ENCODE measurements at regions of chr11 and their contacts with region 1.

Region 1: DNA sequence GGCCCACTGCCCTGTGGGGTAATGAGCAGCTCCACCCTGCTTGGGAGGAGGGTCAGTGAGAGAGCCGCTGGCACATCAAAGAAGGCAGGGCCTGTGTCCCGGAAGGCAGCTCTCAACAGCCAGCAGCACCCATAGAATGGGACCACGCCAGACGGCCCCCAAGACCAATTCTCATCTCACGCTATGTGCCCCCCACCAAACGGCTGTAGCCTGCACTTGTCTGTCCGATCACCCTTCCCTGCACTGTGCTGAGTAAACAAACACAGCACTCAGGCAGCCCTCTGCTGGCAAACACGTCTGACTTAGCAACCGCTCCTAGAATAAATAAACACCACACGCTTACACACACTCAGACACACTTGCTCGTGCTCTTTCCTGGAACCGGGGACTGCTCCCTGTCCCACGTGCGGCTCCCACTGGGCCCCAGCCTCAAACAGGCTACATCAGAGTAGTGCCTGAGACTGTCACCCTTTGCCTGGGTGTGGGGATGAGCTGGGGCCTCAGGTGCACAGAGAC is 53.2 kb upstream of the CDON start:
- DNase-seq: peak; percentile 62
- H3K4me3 ChIP-seq: no peak overlapping the region
- H3K27ac ChIP-seq: peak overlapping the region in 1 of 2 experiments; percentile 100; a peak in 3 of 4 replicates
- H3K4me1 ChIP-seq: peaks cover 32 to 70% of the 10 kb centered on the region in 2 experiments
- H3K27me3 ChIP-seq: no peaks in the 10 kb centered on the region
- CTCF ChIP-seq: no peak
- EP300 ChIP-seq: peak in 1 of 2 experiments; percentile 41; a peak in 1 of 4 replicates
- RAD21 ChIP-seq: peak; percentile 73

Region 2: DNA sequence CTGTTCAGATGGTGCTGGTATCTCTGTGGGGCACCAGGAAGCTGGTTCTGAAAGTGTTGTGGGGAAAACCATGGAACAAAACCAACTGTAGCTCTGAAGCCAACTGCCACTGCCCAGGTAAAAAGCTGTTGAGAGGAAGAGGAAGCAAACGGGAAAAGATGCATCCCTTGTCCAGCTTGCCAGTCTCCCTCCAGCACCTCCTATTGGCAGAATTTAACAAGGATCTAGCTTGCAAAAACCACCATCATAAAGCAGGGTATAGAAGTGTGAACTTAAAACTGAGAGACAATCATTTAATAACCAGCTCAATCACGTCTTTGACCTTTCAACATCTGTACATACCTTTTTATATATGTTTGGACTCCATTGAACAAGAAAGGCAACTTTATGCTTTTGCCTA is 365.2 kb before region 1 on chr11:
- CTCF ChIA-PET with region 1: no interaction called
- POLR2A ChIA-PET with region 1: no interaction called
- DNase-seq: no peak
- H3K4me3 ChIP-seq: no peak overlapping the region
- H3K27ac ChIP-seq: no peak overlapping the region
- H3K4me1 ChIP-seq: no peaks in the 10 kb centered on the region
- H3K27me3 ChIP-seq: peaks cover 15% of the 10 kb centered on the region; the same call in 1 of the 2 replicates
- CTCF ChIP-seq: no peak
- EP300 ChIP-seq: no peak
- RAD21 ChIP-seq: no peak

Region 3: DNA sequence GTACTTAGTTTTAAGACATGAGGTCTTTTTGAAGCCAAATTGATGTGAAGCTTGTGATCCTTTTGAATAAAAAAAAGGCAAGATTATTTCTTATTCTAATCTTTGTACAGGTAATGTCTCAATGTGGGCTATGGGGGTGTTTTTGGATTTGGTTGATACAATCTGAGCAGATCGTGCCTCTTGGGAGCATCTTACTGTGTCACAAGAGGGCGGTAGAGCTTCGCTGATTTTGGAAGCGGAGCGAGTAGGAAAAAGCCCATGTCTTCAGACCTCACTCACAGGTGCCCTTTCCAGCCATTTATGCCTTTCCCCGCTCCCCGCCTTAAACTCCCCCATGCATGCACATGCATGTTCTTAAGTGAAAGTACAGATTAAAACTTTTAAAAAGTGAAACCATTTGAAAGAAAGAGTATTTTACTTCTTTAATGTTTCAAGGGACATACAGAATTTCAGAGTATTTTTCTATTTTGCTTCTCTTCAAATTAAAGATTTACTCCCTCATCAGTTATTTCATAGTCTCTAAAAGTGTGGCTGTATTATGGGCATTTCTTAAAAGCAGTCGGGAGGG is 192.8 kb before region 1 on chr11:
- CTCF ChIA-PET with region 1: interaction called, 22 read pairs
- POLR2A ChIA-PET with region 1: interaction called, 4 read pairs
- DNase-seq: peak; percentile 74
- H3K4me3 ChIP-seq: no peak overlapping the region; a peak in 1 of 4 replicates
- H3K27ac ChIP-seq: no peak overlapping the region
- H3K4me1 ChIP-seq: peaks cover 0 to 26% of the 10 kb centered on the region in 2 experiments; a peak in 1 of 4 replicates
- H3K27me3 ChIP-seq: peaks cover 38% of the 10 kb centered on the region; the same call in 1 of the 2 replicates
- CTCF ChIP-seq: peak; percentile 90
- EP300 ChIP-seq: no peak
- RAD21 ChIP-seq: peak; percentile 98

Region 4: DNA sequence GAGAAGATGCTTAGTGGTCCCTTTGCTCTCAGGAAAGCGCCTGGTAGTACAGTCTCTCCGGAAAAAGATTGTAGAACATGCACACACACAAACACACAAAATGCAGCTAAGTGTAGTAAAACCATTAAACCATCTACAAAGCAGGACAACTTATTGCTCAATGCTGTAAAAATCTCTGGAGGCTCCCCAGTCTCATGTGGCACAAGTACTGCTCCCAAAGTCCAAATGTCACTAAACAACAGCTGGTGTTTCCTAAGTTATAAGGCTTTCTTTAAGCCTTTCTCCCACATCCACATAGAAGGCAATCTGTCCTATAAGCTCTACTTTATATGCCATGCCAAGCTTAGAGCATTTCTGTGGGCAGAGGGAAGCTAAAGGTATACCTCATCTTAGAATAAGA is 86.1 kb before region 1 on chr11:
- CTCF ChIA-PET with region 1: no interaction called
- POLR2A ChIA-PET with region 1: no interaction called
- DNase-seq: no peak
- H3K4me3 ChIP-seq: no peak overlapping the region
- H3K27ac ChIP-seq: no peak overlapping the region
- H3K4me1 ChIP-seq: peaks cover 0 to 3% of the 10 kb centered on the region in 2 experiments; a peak in 1 of 4 replicates
- H3K27me3 ChIP-seq: no peaks in the 10 kb centered on the region
- CTCF ChIP-seq: no peak
- EP300 ChIP-seq: no peak
- RAD21 ChIP-seq: no peak

Region 5: GRCh38 chr11:126053415-126054286 is 62.2 kb before region 1 on chr11:
- CTCF ChIA-PET with region 1: interaction called, 95 read pairs
- POLR2A ChIA-PET with region 1: interaction called, 8 read pairs
- DNase-seq: peak; percentile 57
- H3K4me3 ChIP-seq: no peak overlapping the region
- H3K27ac ChIP-seq: peak overlapping the region in 1 of 2 experiments; percentile 92; a peak in 2 of 4 replicates
- H3K4me1 ChIP-seq: peaks cover 0 to 49% of the 10 kb centered on the region in 2 experiments; a peak in 3 of 4 replicates
- H3K27me3 ChIP-seq: no peaks in the 10 kb centered on the region
- CTCF ChIP-seq: no peak
- EP300 ChIP-seq: peak in 1 of 2 experiments; percentile 67; a peak in 1 of 4 replicates
- RAD21 ChIP-seq: no peak

Region 6: DNA sequence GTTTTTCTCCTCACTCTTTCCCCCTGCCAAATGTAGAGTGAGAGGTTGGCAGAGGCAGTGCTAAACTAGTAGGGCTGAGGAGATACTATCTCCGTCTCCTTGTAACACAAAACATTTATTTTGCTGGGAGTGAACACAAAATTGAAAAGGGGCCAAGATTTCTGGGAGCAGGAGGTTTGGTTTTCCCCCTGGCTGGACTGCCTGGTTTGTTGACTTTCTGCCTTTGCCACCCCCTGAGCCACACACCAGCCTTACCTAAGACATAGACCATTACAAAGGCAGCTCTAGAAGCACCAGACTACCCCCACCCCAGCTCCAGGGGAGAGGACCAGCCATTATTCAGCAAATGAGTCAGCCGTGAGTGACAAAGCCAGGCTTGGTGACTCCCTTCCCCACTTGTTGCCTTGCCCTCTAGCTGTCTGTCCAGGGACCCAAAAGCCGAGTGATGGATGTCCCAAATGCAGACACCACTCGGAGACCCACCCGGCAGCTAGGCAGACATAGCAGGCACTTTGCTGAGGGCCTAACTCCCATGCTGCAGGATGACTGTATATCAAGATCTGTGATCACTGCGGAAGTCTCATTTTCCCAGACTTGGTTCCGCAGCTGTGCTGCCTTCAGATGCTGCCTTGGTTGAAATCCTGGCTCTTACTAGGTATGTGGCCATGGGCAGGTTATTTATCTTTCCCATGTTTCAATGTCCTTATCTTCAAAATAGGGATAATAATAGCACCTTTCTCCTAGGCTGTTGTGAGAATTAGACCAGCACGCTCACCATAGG is 35.5 kb before region 1 on chr11:
- CTCF ChIA-PET with region 1: interaction called, 16 read pairs
- POLR2A ChIA-PET with region 1: interaction called, 27 read pairs
- DNase-seq: peak; percentile 72
- H3K4me3 ChIP-seq: no peak overlapping the region
- H3K27ac ChIP-seq: peak overlapping the region; percentile 38 to 94
- H3K4me1 ChIP-seq: peaks cover 10 to 53% of the 10 kb centered on the region in 2 experiments; a peak in 3 of 4 replicates
- H3K27me3 ChIP-seq: no peaks in the 10 kb centered on the region
- CTCF ChIP-seq: no peak
- EP300 ChIP-seq: peak in 1 of 2 experiments; percentile 33; a peak in 2 of 4 replicates
- RAD21 ChIP-seq: no peak; the same call in 1 of the 2 replicates

Region 7: DNA sequence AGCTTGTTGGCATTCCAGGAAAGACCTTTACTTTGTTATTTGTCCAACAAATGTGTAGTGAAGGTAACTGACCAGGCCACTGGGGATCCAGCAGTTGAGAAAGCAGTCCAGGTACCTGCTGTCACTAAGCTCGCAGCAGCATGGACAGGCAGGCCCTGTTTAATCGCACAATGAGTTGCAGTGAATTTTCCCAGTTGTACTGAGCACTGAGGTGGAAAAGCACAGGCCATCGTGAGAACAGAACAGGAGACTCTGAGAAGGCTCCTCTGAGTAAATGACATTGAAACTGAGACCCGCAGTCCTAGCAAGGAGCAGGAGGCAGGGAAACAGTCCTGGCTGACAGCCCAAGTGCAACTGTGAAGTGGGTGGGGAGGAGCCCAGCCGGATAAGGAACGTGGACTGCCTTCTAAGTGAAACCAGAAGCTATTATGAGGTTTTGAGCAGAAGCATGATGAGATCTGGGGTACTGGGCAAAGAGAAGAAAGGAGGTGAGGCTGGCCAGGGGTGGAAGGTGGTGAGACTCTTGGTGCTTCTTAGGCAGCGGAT is 13.4 kb before region 1 on chr11:
- CTCF ChIA-PET with region 1: interaction called, 21 read pairs
- POLR2A ChIA-PET with region 1: interaction called, 45 read pairs
- DNase-seq: peak; percentile 68
- H3K4me3 ChIP-seq: no peak overlapping the region
- H3K27ac ChIP-seq: peak overlapping the region in 1 of 2 experiments; percentile 93; a peak in 2 of 4 replicates
- H3K4me1 ChIP-seq: peaks cover 6 to 70% of the 10 kb centered on the region in 2 experiments; a peak in 3 of 4 replicates
- H3K27me3 ChIP-seq: no peaks in the 10 kb centered on the region
- CTCF ChIP-seq: no peak
- EP300 ChIP-seq: peak in 1 of 2 experiments; percentile 31; a peak in 1 of 4 replicates
- RAD21 ChIP-seq: no peak

Region 8: GRCh38 chr11:126140932-126141291 is 25.0 kb after region 1 on chr11:
- CTCF ChIA-PET with region 1: interaction called, 14 read pairs
- POLR2A ChIA-PET with region 1: interaction called, 9 read pairs
- DNase-seq: peak; percentile 66
- H3K4me3 ChIP-seq: peak overlapping the region in 1 of 2 experiments; percentile 43; a peak in 2 of 4 replicates
- H3K27ac ChIP-seq: peak overlapping the region in 1 of 2 experiments; percentile 83; a peak in 2 of 4 replicates
- H3K4me1 ChIP-seq: peaks cover 31 to 46% of the 10 kb centered on the region in 2 experiments
- H3K27me3 ChIP-seq: peaks cover 18% of the 10 kb centered on the region; the same call in 1 of the 2 replicates
- CTCF ChIP-seq: no peak
- EP300 ChIP-seq: peak; percentile 60 to 77; a peak in 2 of 4 replicates
- RAD21 ChIP-seq: peak; percentile 26

Region 9: GRCh38 chr11:126194121-126194543 is 78.3 kb after region 1 on chr11:
- CTCF ChIA-PET with region 1: interaction called, 55 read pairs
- POLR2A ChIA-PET with region 1: interaction called, 13 read pairs
- DNase-seq: peak; percentile 82
- H3K4me3 ChIP-seq: no peak overlapping the region; a peak in 1 of 4 replicates
- H3K27ac ChIP-seq: no peak overlapping the region
- H3K4me1 ChIP-seq: peaks cover 0 to 14% of the 10 kb centered on the region in 2 experiments; a peak in 1 of 4 replicates
- H3K27me3 ChIP-seq: no peaks in the 10 kb centered on the region
- CTCF ChIP-seq: peak; percentile 85
- EP300 ChIP-seq: no peak
- RAD21 ChIP-seq: peak; percentile 99

Region 10: GRCh38 chr11:126359431-126360416 is 243.8 kb after region 1 on chr11:
- CTCF ChIA-PET with region 1: no interaction called
- POLR2A ChIA-PET with region 1: no interaction called
- DNase-seq: peak; percentile 86
- H3K4me3 ChIP-seq: no peak overlapping the region
- H3K27ac ChIP-seq: peak overlapping the region in 1 of 2 experiments; percentile 58; a peak in 2 of 4 replicates
- H3K4me1 ChIP-seq: peaks cover 14 to 37% of the 10 kb centered on the region in 2 experiments; a peak in 2 of 4 replicates
- H3K27me3 ChIP-seq: no peaks in the 10 kb centered on the region
- CTCF ChIP-seq: peak; percentile 19; the same call in 1 of the 2 replicates
- EP300 ChIP-seq: peak in 1 of 2 experiments; percentile 29; a peak in 1 of 4 replicates
- RAD21 ChIP-seq: 0 out of 2 replicates have a peak, but pooled peaks have one; percentile 11

Measured in SK-N-SH (cell line).